ENCODE measurements at regions of chr3 and their contacts with region 1.

Region 1: GRCh38 chr3:184362668-184363540 is 1.4 kb downstream of the POLR2H start:
- DNase-seq: peak; percentile 96
- H3K4me3 Mint-ChIP-seq: peak overlapping the region; percentile 100
- H3K27ac Mint-ChIP-seq: peak overlapping the region; percentile 97
- H3K4me1 Mint-ChIP-seq: peaks cover 22% of the 10 kb centered on the region
- H3K27me3 Mint-ChIP-seq: no peaks in the 10 kb centered on the region

Region 2: DNA sequence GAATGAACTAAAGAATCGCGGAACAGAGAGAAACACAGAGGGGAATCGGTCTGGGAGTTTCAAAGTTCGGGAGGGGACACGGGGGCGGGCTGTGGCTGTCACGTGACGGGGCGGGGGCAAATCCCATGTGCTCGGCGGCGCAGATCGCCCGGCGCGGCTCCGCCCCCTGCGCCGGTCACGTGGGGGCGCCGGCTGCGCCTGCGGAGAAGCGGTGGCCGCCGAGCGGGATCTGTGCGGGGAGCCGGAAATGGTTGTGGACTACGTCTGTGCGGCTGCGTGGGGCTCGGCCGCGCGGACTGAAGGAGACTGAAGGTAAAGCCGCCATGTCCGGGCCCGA is 48.6 kb before region 1 on chr3 and contains the start of gene EIF4G1:
- intact Hi-C with region 1: loop called (anchors 1 kb)
- DNase-seq: peak; percentile 91
- H3K4me3 Mint-ChIP-seq: peak within 1 kb of the TSS; percentile 87
- H3K27ac Mint-ChIP-seq: peak within 1 kb of the TSS; percentile 86
- H3K4me1 Mint-ChIP-seq: peaks cover 22% of the 10 kb centered on the region
- H3K27me3 Mint-ChIP-seq: no peaks in the 10 kb centered on the region
- total RNA-seq, gene EIF4G1: 624 and 628 TPM in 2 replicates

Region 3: GRCh38 chr3:184335661-184336546 is 27.0 kb before region 1 on chr3:
- intact Hi-C with region 1: loop called (anchors 1 kb)
- DNase-seq: peak; percentile 81
- H3K4me3 Mint-ChIP-seq: peak overlapping the region; percentile 88
- H3K27ac Mint-ChIP-seq: peak overlapping the region; percentile 87
- H3K4me1 Mint-ChIP-seq: peaks cover 54% of the 10 kb centered on the region
- H3K27me3 Mint-ChIP-seq: no peaks in the 10 kb centered on the region

Region 4: GRCh38 chr3:184459355-184459754 is 96.5 kb after region 1 on chr3:
- intact Hi-C with region 1: no loop called
- DNase-seq: no peak
- H3K4me3 Mint-ChIP-seq: no peak overlapping the region
- H3K27ac Mint-ChIP-seq: no peak overlapping the region
- H3K4me1 Mint-ChIP-seq: no peaks in the 10 kb centered on the region
- H3K27me3 Mint-ChIP-seq: peaks cover 13% of the 10 kb centered on the region

Region 5: GRCh38 chr3:184523825-184524615 is 161.1 kb after region 1 on chr3:
- intact Hi-C with region 1: loop called (anchors 2 kb)
- DNase-seq: peak; percentile 39
- H3K4me3 Mint-ChIP-seq: peak overlapping the region; percentile 44
- H3K27ac Mint-ChIP-seq: peak overlapping the region; percentile 80
- H3K4me1 Mint-ChIP-seq: peaks cover 25% of the 10 kb centered on the region
- H3K27me3 Mint-ChIP-seq: peaks cover 8% of the 10 kb centered on the region

Region 6: DNA sequence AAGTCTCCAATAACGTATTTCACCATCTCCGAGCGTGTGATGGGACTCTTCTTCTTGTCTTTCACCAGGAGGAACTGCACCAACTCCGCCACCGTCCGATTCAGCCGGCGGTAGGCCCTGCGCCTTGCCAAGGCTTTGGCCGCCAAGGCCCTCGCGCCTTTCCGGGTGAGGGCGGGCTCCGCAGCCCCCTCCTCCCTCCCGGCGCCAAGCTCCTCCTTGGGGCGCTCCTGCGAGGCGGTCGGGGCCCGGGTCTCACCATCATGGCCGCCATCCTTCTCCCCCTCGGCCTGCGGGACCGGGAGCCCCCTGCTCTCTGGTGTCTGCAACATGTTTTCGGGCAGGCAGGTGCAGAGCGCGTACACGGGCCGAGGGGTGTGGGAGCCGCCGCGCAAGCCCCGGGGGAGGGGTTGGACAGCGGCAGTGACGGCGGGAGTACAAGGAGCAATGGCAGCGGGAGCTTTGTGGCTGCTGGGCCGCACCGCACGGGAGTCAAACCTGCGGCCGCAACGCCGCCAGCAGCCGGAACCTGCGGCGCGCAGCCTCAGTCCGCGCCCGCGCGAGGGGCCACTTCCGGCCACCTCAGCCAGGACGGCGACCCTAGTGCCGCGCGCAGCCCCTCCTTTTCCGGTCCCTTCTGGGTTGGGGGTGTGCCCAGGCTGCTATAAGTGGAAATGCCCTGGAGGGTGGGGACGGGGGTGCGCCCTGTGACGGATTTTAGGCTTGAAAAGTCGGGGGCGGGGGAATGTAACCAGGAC is 348.8 kb after region 1 on chr3 and contains the start of gene MAGEF1:
- intact Hi-C with region 1: loop called (anchors 5 kb)
- DNase-seq: peak; percentile 72
- H3K4me3 Mint-ChIP-seq: peak within 1 kb of the TSS; percentile 96
- H3K27ac Mint-ChIP-seq: peak within 1 kb of the TSS; percentile 75
- H3K4me1 Mint-ChIP-seq: peaks cover 30% of the 10 kb centered on the region
- H3K27me3 Mint-ChIP-seq: peaks cover 5% of the 10 kb centered on the region
- total RNA-seq, gene MAGEF1: 15.9 and 16.0 TPM in 2 replicates

Measured in activated T-helper 2 cell treated with anti-CD3 and anti-CD28 coated beads, Interferon-gamma antibody, Interleukin-2, Interleukin-4, amounts not matched to agents 10 μg/mL and 5 μg/mL and 100 μg/mL, durations not matched to agents 14 hours and 24 hours and 36 hours (primary cell).